PC-3 (cell line): ENCODE measurements at regions of chr10 and their contacts with region 1.

Region 1: GRCh38 chr10:74176380-74177139 is 25.5 kb downstream of the ADK start:
- DNase-seq: peak; percentile 100
- ATAC-seq: peak; percentile 94
- H3K4me3 ChIP-seq: peak overlapping the region; percentile 69
- H3K27ac ChIP-seq: peak overlapping the region; percentile 76
- H3K4me1 ChIP-seq: peaks cover 40% of the 10 kb centered on the region
- H3K27me3 ChIP-seq: no peaks in the 10 kb centered on the region
- CTCF ChIP-seq: 0 out of 2 replicates have a peak, but pooled peaks have one; percentile 6

Region 2: GRCh38 chr10:74213571-74214162 is 37.1 kb after region 1 on chr10:
- CTCF ChIA-PET with region 1: interaction called, 9 read pairs
- POLR2A ChIA-PET with region 1: interaction called, 7 read pairs
- intact Hi-C with region 1: loop called (anchors 1 kb)
- DNase-seq: peak; percentile 95
- ATAC-seq: peak; percentile 91
- H3K4me3 ChIP-seq: no peak overlapping the region
- H3K27ac ChIP-seq: no peak overlapping the region
- H3K4me1 ChIP-seq: no peaks in the 10 kb centered on the region
- H3K27me3 ChIP-seq: no peaks in the 10 kb centered on the region
- CTCF ChIP-seq: peak; percentile 100; the same call in 1 of the 2 replicates